AG04449 (cell line): ENCODE measurements at regions of chr9 and their contacts with region 1.

Region 1: GRCh38 chr9:13047827-13048587 is 231.5 kb downstream of the MPDZ start:
- DNase-seq: no peak
- H3K4me3 ChIP-seq: no peak overlapping the region
- CTCF ChIP-seq: no peak

Region 2: DNA sequence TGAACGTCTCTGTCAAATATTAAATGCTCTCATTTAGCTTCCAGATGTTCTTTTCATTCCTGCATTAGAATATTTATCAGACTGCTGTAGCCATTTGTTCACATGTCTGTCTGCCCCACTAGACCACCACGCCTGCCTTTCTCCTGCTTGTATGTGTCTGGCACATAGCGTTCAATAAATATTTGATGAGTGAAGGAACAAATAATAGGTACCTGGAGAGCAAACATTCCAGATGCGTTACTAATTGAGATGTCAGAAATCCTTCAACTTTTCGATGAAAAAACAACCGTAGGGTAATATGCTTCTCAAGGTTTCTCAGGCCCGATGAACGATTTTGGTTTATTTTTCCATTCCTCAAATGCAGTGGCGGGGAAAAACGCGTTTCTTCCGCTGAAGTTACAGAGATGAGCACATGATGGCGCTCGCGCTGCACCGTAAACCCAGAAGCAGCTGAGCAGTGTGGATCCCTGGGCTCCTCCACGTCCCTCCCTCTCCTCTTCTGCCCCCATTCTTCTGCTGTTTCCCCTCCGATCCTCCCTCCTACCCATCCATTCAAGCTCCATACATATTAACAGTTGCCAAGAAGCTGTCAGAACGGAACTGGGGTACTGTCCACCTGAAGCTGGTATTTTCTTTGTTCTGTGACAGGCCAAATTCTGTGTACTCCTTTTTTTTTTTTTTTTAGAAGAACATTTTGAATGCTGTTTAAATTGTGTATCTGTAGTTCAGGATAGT is 13.9 kb before region 1 on chr9:
- CTCF ChIA-PET with region 1: interaction called, 15 read pairs
- POLR2A ChIA-PET with region 1: no interaction called
- DNase-seq: no peak
- H3K4me3 ChIP-seq: peak overlapping the region; percentile 39; the same call in 1 of the 2 replicates
- CTCF ChIP-seq: peak; percentile 86